ENCODE measurements at regions of chr4 and their contacts with region 1.

Region 1: GRCh38 chr4:10554694-10555093 is 97.5 kb upstream of the ZNF518B start:
- DNase-seq: peak; percentile 64
- ATAC-seq: peak; percentile 61
- H3K4me3 Mint-ChIP-seq: no peak overlapping the region
- H3K27ac Mint-ChIP-seq: no peak overlapping the region
- H3K4me1 Mint-ChIP-seq: peaks cover 3% of the 10 kb centered on the region
- H3K27me3 Mint-ChIP-seq: peaks cover 11% of the 10 kb centered on the region

Region 2: DNA sequence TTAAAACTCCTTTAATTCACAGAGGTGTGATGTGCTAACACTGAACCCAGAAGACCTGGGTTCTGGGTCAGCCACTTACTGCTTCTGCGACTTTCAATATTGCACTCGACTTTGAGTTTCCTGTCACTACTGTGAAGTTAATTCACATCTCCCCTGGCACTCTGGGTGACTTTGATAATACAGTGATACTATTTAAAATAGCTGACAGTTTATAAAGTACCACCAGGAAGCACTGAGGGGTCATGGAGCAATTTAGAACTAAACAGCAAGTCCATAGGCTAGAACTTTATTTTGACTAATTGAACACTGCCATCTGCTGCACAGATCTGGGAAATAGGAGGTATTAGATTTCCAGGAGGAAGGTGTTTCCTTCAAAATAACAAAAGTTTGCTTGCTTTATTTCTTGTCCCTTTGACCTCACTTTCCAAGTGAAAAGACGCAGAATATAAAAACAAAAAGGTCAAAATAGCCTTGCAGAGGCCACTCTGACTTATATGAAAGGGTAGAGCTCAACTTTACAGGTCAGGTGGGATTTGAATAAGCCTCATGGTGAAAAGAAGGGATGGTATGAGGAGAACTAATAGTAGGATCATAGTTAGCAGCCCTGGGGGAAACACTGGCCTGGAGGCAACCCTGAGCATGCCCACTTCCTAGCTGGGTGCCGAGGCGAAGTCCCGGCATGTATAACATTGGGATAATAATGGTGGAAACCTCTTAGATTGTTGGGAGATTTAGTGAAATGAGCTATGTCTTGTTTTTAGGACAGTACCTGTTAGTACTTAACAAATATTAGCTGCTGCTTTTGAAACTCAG is 150.9 kb before region 1 on chr4:
- CTCF ChIA-PET with region 1: no interaction called
- POLR2A ChIA-PET with region 1: no interaction called
- intact Hi-C with region 1: no loop called
- DNase-seq: peak; percentile 7
- ATAC-seq: no peak
- H3K4me3 Mint-ChIP-seq: no peak overlapping the region
- H3K27ac Mint-ChIP-seq: no peak overlapping the region
- H3K4me1 Mint-ChIP-seq: no peaks in the 10 kb centered on the region
- H3K27me3 Mint-ChIP-seq: no peaks in the 10 kb centered on the region

Region 3: GRCh38 chr4:11424000-11424399 is 869.3 kb after region 1 on chr4:
- CTCF ChIA-PET with region 1: interaction called, 6 read pairs
- POLR2A ChIA-PET with region 1: no interaction called
- intact Hi-C with region 1: loop called (anchors 1 to 10 kb)
- DNase-seq: peak; percentile 41
- ATAC-seq: no peak
- H3K4me3 Mint-ChIP-seq: no peak overlapping the region
- H3K27ac Mint-ChIP-seq: no peak overlapping the region
- H3K4me1 Mint-ChIP-seq: peaks cover 12% of the 10 kb centered on the region
- H3K27me3 Mint-ChIP-seq: peaks cover 21% of the 10 kb centered on the region

Region 4: DNA sequence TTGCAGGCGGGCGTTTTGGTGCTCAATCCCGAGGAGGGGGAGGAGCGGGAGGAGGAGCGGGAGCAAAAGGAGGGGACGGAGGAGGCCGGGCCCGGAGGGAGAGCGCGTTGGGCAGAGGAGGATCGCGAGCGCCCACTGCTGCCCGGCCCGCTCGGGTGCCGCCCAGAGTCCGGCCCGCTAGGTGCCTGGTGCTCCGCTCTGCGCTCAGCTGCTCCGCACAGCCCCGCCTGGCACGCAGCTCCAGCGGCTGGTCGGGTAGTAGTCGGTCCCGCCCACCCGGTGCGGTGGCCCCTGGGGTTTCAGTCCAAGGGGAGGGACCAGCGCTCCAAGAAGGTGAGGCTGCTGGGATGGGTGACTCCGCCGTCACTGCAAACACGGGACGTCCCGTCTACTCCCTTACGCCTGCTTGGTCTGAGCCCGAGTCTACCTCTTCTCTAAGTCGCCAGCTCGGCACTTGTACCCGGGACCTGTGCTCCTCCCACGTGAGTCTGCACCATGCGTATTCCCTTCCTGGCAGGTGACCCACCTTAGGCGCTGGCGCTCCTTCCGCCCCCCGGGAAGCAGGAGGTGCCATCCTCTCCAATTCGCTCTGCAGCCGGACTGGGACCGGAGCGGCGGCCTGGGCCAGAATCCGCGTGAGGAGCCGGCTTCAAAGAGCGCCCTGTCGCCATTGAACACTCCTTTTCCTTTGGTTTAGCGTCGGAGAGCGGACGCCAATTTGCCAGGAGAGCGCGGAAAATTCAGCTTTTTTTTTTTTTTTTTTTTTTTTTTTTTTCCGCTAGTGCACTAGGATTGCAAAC is 874.4 kb after region 1 on chr4:
- CTCF ChIA-PET with region 1: interaction called, 6 read pairs
- POLR2A ChIA-PET with region 1: no interaction called
- intact Hi-C with region 1: loop called (anchors 1 to 10 kb)
- DNase-seq: peak; percentile 70
- ATAC-seq: peak; percentile 89
- H3K4me3 Mint-ChIP-seq: peak overlapping the region; percentile 57
- H3K27ac Mint-ChIP-seq: no peak overlapping the region
- H3K4me1 Mint-ChIP-seq: peaks cover 15% of the 10 kb centered on the region
- H3K27me3 Mint-ChIP-seq: peaks cover 33% of the 10 kb centered on the region

Region 5: DNA sequence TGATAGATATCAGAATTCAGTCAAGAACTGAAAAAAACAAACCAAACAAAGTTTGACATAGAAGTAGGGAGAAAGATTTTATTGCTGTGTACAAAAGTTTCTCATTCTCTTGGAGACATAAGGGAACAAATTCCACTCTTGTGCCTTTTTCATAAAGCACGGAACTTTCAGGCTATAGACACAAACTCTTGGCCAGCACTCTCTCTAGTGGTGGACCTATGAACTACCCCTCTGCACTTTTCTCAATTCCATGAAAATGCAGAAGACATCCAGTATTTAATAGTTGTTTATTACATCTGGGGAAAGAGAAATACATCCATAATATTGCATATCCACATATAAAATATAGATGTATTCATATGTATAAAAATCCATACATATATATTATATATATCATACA is 1165.6 kb after region 1 on chr4:
- CTCF ChIA-PET with region 1: no interaction called
- POLR2A ChIA-PET with region 1: no interaction called
- intact Hi-C with region 1: loop called in 1 of 2 experiments (anchors 2 kb)
- DNase-seq: no peak
- ATAC-seq: no peak
- H3K4me3 Mint-ChIP-seq: no peak overlapping the region
- H3K27ac Mint-ChIP-seq: no peak overlapping the region
- H3K4me1 Mint-ChIP-seq: no peaks in the 10 kb centered on the region
- H3K27me3 Mint-ChIP-seq: peaks cover 17% of the 10 kb centered on the region

Measured in activated CD4-positive, alpha-beta T cell treated with anti-CD3 and anti-CD28 coated beads for 36 hours (primary cell).